Activated T-helper 1 cell treated with anti-CD3 and anti-CD28 coated beads, Interleukin-12 subunit alpha, Interleukin-12 subunit beta, Interleukin-2, Interleukin-4 antibody, amounts not matched to agents 30 ng/mL and 10 ng/mL and 1 ng/mL, durations not matched to agents 14 hours and 24 hours and 36 hours (primary cell): ENCODE measurements at regions of chr12 and their contacts with region 1.

Region 1: GRCh38 chr12:53321074-53321814 is at the start of gene AAAS:
- DNase-seq: peak; percentile 95
- H3K4me3 Mint-ChIP-seq: peak within 1 kb of the TSS; percentile 96
- H3K27ac Mint-ChIP-seq: peak within 1 kb of the TSS; percentile 97
- H3K4me1 Mint-ChIP-seq: peaks cover 41% of the 10 kb centered on the region
- H3K27me3 Mint-ChIP-seq: peaks cover 2% of the 10 kb centered on the region
- total RNA-seq, gene AAAS: 81.4 and 85.7 TPM in 2 replicates

Region 2: GRCh38 chr12:53079226-53080117 is 241.8 kb before region 1 on chr12 and contains the start of gene SPRYD3:
- intact Hi-C with region 1: loop called (anchors 1 kb)
- DNase-seq: peak; percentile 97
- H3K4me3 Mint-ChIP-seq: peak within 1 kb of the TSS; percentile 93
- H3K27ac Mint-ChIP-seq: peak within 1 kb of the TSS; percentile 92
- H3K4me1 Mint-ChIP-seq: peaks cover 36% of the 10 kb centered on the region
- H3K27me3 Mint-ChIP-seq: no peaks in the 10 kb centered on the region
- total RNA-seq, gene SPRYD3: 41.2 and 42.6 TPM in 2 replicates

Region 3: GRCh38 chr12:53213348-53213747 is 107.9 kb before region 1 on chr12:
- intact Hi-C with region 1: loop called (anchors 1 kb)
- DNase-seq: peak; percentile 75
- H3K4me3 Mint-ChIP-seq: no peak overlapping the region
- H3K27ac Mint-ChIP-seq: peak overlapping the region; percentile 11
- H3K4me1 Mint-ChIP-seq: peaks cover 78% of the 10 kb centered on the region
- H3K27me3 Mint-ChIP-seq: no peaks in the 10 kb centered on the region

Region 4: GRCh38 chr12:53267999-53268647 is 53.1 kb before region 1 on chr12 and contains the start of gene ESPL1:
- intact Hi-C with region 1: loop called (anchors 1 kb)
- DNase-seq: peak; percentile 81
- H3K4me3 Mint-ChIP-seq: peak within 1 kb of the TSS; percentile 90
- H3K27ac Mint-ChIP-seq: peak within 1 kb of the TSS; percentile 88
- H3K4me1 Mint-ChIP-seq: peaks cover 43% of the 10 kb centered on the region
- H3K27me3 Mint-ChIP-seq: no peaks in the 10 kb centered on the region
- total RNA-seq, gene ESPL1: 61.2 and 68.4 TPM in 2 replicates

Region 5: DNA sequence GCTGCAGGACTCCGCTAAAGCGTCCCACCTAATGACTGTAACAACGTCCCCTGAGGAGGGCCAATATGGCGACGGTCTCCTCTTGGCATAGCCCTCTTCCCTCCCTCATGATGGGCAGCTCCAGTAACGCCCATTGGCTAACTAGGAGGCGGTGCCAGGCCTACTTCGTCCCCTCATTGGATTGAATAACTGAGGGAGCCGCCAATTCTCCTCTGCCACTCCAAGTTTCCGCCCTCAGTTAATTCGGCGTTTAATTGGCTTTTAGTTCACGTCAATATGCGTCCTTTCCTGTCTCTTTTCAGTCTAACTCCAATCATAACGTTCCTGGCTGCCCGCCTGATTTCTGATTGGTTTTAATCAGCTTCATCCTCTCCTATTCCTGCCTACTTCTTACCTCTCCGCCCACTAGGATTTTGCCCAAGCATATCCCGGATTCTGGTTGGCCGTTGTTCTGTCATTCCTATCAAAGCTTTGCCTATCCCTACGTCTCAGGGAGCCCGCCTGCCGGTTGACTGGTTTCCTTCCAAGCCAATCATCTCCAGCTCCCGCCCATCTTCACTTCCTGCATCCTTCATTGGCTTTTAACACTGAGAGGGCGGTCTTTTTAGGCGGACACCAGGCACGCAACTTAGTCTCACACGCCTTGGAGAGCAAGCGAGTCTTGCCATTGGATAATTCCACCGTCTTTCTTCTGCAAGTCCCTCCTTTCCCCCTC is 58.3 kb after region 1 on chr12:
- intact Hi-C with region 1: loop called (anchors 1 kb)
- DNase-seq: peak; percentile 99
- H3K4me3 Mint-ChIP-seq: no peak overlapping the region
- H3K27ac Mint-ChIP-seq: no peak overlapping the region
- H3K4me1 Mint-ChIP-seq: peaks cover 37% of the 10 kb centered on the region
- H3K27me3 Mint-ChIP-seq: no peaks in the 10 kb centered on the region

Region 6: DNA sequence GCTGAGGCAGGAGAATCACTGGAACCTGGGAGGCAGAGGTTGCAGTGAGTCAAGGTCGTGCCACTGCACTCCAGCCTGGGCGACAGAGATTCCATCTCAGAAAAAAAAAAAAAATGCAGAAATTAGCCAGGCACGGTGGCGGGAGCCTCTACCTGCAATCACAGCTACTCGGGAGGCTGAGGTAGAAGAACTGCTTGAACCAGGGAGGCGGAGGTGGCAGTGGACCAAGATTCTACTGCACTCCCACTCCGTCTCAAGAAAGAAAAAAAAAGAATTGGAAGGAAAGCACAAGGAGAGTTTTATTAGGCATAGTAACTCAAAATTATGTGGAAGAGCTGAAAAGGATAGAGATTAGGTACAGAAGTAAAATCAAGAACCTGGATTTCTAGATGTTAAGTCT is 81.6 kb after region 1 on chr12:
- intact Hi-C with region 1: no loop called
- DNase-seq: no peak
- H3K4me3 Mint-ChIP-seq: no peak overlapping the region
- H3K27ac Mint-ChIP-seq: no peak overlapping the region
- H3K4me1 Mint-ChIP-seq: peaks cover 3% of the 10 kb centered on the region
- H3K27me3 Mint-ChIP-seq: peaks cover 2% of the 10 kb centered on the region

Region 7: DNA sequence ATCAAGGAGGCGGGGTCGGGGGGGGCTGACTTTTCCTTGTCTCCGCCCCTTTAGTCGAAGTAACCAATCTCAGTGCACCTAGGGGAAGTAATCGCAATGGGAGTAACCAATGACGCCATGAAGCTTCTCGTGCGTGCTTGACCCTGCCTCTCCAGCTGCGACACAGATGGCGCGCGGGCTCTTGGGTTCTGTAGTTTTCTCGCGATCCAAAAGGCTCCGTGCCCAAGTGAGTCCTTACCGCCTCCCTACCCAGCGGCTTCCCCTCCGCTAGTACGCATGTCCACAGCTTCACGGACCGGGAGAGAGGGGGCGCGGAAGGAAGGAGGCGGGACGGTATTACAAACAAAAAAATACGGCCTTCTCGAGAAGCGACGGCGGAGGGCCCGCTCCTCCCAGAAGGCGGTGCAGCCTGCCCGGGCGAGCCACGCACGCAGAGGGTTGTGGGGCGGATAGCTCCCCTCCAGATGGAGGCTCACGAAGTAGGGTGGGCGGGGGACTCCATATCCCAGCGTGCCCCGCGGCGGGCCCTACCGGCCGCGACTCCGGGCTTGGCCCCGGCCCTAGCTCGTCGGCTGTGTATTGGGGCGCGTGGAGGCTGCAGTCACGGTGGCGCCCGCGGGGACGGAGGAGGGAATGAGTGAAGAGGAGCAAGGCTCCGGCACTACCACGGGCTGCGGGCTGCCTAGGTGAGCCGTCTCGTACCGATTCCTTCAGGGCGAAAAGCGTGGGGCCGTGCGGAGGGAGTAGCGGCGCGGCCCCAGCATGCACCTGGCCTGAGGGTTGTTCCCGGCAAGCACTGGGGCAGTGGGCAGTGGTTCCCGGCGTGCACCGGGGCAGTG is 179.8 kb after region 1 on chr12 and contains the start of gene TARBP2:
- intact Hi-C with region 1: loop called (anchors 1 kb)
- DNase-seq: peak; percentile 93
- H3K4me3 Mint-ChIP-seq: peak within 1 kb of the TSS; percentile 95
- H3K27ac Mint-ChIP-seq: peak within 1 kb of the TSS; percentile 98
- H3K4me1 Mint-ChIP-seq: peaks cover 53% of the 10 kb centered on the region
- H3K27me3 Mint-ChIP-seq: peaks cover 2% of the 10 kb centered on the region
- total RNA-seq, gene TARBP2: 47.7 and 48.2 TPM in 2 replicates

Region 8: GRCh38 chr12:53727310-53728041 is 406.2 kb after region 1 on chr12 and contains the start of gene CALCOCO1:
- intact Hi-C with region 1: loop called (anchors 5 kb)
- DNase-seq: peak; percentile 96
- H3K4me3 Mint-ChIP-seq: peak within 1 kb of the TSS; percentile 92
- H3K27ac Mint-ChIP-seq: peak within 1 kb of the TSS; percentile 80
- H3K4me1 Mint-ChIP-seq: peaks cover 26% of the 10 kb centered on the region
- H3K27me3 Mint-ChIP-seq: no peaks in the 10 kb centered on the region
- total RNA-seq, gene CALCOCO1: 17.4 and 19.2 TPM in 2 replicates